Breast epithelium (tissue), 4 donors: ENCODE measurements at regions of chr15 and their contacts with region 1.

Region 1: DNA sequence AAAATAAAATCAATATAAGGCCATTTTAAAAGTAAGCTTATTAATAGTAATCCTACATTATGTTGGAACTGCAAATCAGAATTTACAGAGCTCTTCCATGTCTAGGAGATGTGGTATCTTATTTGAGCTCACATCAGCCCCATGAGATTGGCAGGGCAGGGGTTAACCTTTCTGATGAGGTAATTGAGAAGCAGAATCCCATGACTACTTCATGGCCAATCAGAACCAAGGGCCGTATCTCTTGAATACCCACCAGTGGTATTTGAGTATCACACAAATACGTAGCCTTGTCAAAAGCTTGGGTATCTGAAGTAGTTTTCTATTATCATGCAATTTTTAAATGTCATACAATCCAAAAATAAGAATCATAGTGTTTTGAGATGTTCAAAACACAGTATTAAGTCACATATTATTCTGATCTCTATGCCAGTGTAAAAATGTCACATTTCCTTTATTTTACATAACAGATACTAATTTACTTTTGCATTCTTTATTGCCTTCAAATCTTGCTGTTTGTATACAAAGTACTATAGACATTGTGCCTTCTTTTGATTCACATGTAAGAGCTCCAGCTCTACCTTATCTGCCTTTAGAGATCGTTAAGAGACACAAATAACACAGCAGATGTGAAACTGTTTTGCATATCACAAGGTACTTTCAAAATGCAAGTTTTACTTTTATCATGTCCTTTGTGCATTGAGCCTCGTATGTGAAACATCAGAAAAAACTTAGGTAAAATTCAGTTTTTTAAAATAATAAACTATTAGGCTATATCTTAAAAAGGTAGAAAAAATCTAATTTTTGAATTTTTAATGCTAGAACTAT is 251.7 kb upstream of the GOLGA6L4 start:
- DNase-seq: no peak
- H3K4me3 ChIP-seq: no peak overlapping the region
- H3K27ac ChIP-seq: no peak overlapping the region
- H3K4me1 ChIP-seq: no peaks in the 10 kb centered on the region
- H3K27me3 ChIP-seq: no peaks in the 10 kb centered on the region
- CTCF ChIP-seq: no peak
- POLR2A ChIP-seq: no peak

Region 2: DNA sequence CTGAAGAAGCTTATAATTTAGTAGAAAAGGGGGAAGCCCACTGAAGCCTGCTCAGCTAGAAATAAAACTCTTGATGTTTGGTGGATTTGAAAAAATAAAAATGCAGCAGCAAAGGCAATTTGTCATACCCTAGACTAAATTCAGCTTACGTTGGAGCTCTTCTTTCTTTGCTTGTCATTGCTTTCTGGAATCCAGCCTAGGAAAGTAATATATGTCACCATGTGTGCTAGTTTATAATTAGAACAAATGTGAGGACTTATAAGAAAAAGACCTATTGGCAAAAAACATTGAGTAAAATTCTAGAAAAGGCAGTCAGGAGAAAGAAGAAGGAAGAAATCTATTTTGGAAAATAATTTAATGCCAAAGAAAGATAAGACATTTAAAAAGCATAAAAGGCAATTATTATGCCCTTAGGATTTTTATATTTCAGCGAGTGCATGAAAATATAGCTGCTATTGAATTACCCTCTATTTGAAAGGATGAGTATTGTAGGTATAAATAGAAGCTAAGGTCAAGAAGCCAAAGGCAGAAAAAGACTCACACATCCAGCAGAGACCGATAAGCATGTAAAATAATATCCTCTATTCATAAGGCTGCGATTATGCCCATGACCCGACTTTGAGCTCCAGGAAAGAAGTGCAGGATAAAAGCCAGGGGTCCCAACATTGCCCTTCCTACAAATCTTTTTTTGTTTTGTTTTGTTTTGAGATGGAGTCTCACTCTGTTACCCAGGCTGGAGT is 906.2 kb before region 1 on chr15:
- intact Hi-C with region 1: loop called (anchors 10 kb)
- DNase-seq: no peak
- H3K4me3 ChIP-seq: no peak overlapping the region
- H3K27ac ChIP-seq: no peak overlapping the region
- H3K4me1 ChIP-seq: no peaks in the 10 kb centered on the region
- H3K27me3 ChIP-seq: peaks cover 0 to 10% of the 10 kb centered on the region in 2 donors
- CTCF ChIP-seq: no peak
- POLR2A ChIP-seq: no peak

Region 3: DNA sequence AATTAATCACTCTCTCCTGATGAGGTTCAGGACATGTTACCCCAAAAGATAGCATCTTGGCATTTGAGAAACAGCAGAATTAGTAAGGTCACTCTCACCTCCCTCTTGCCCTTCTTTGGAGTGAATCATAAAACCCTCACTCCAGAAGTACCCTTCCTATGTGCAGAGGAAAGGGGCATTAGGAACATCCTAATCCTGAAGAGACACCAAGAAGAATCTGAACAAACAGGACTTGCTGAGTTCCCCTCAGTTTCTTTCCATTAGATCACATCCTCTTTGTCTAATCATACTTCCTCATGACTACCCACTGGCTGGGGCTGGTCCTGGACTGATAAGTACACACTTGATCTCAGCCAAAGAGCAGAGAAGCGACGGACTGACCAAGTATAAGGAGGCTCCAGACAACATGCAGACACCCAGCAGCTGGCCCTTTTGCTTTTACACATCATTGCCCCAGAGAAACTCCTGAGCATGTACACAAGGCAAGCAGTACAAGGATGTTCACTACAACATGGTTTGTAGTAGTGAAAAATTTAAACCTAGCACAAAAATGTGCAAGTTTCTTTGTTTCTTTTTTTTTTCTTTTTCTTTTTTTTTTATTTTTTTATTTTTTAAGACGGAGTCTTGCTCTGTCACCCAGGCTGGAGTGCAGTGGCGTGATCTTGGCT is 891.4 kb before region 1 on chr15:
- intact Hi-C with region 1: no loop called
- DNase-seq: no peak
- H3K4me3 ChIP-seq: no peak overlapping the region
- H3K27ac ChIP-seq: no peak overlapping the region
- H3K4me1 ChIP-seq: no peaks in the 10 kb centered on the region
- H3K27me3 ChIP-seq: no peaks in the 10 kb centered on the region
- CTCF ChIP-seq: no peak
- POLR2A ChIP-seq: no peak

Region 4: DNA sequence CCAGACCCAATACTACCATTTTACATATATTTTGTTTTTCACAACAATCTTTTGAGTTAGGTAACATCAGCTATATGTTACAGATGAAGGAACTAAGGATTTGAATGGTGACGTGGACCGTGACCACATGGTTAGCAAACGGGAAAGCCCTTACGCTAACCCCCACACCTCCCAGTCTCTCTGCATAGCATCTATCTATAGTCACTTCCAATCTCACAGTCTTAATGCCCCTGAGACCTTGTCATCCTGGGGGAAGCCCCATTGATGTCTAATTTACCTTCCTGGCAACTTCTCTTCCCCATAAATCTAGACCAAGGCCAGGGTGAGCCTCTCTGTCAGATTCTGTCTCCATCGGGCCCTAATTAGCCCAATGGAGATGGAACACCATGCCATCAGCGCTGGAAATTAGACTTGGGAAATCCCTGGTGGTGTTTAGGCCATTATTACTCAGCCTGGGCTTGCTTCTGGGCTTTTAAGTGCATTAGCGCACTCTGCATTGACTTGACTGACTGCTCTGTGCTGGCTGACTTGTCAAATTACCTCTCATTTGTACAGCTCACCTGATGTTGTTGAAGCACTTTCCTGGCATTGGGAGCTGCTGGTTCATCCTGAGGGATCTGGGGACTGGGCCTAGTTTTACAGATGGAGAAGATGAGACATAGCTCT is 570.7 kb before region 1 on chr15:
- intact Hi-C with region 1: no loop called
- DNase-seq: no peak
- H3K4me3 ChIP-seq: no peak overlapping the region
- H3K27ac ChIP-seq: no peak overlapping the region
- H3K4me1 ChIP-seq: no peaks in the 10 kb centered on the region
- H3K27me3 ChIP-seq: no peaks in the 10 kb centered on the region
- CTCF ChIP-seq: no peak
- POLR2A ChIP-seq: no peak